ENCODE measurements at regions of chr2 and their contacts with region 1.

Region 1: GRCh38 chr2:231713730-231714430 is 5.6 kb downstream of the PTMA start:
- DNase-seq: peak; percentile 88 to 93
- ATAC-seq: peak; percentile 44 to 60
- H3K4me3 ChIP-seq: no peak overlapping the region
- H3K27ac ChIP-seq: peak overlapping the region in 1 of 2 experiments; percentile 73; a peak in 3 of 6 replicates
- H3K4me1 ChIP-seq: peaks cover 55% of the 10 kb centered on the region
- CTCF ChIP-seq: peak; percentile 89
- EP300 ChIP-seq: no peak
- POLR2A ChIP-seq: no peak
- RAD21 ChIP-seq: peak; percentile 50 to 60

Region 2: GRCh38 chr2:231530091-231531011 is 183.5 kb before region 1 on chr2 and contains the start of gene NMUR1:
- CTCF ChIA-PET with region 1: interaction called, 14 read pairs
- POLR2A ChIA-PET with region 1: no interaction called
- DNase-seq: peak; percentile 48 to 52
- ATAC-seq: peak; percentile 62 to 90
- H3K4me3 ChIP-seq: peak within 1 kb of the TSS; percentile 44
- H3K27ac ChIP-seq: peak within 1 kb of the TSS; percentile 30 to 82; a peak in 4 of 6 replicates
- H3K4me1 ChIP-seq: peaks cover 4% of the 10 kb centered on the region; the same call in 1 of the 3 replicates
- CTCF ChIP-seq: peak; percentile 90
- EP300 ChIP-seq: no peak
- POLR2A ChIP-seq: no peak
- RAD21 ChIP-seq: peak; percentile 20 to 57; a peak in 4 of 5 replicates
- polyA plus RNA-seq, gene NMUR1: 0.05 TPM in 1 of 2 replicates, not detected in the other

Region 3: GRCh38 chr2:231674587-231675338 is 39.1 kb before region 1 on chr2:
- CTCF ChIA-PET with region 1: interaction called, 4,158 read pairs
- POLR2A ChIA-PET with region 1: interaction called, 45 read pairs
- DNase-seq: peak in 1 of 2 experiments; percentile 70
- ATAC-seq: peak; percentile 42 to 60
- H3K4me3 ChIP-seq: no peak overlapping the region
- H3K27ac ChIP-seq: peak overlapping the region; percentile 97
- H3K4me1 ChIP-seq: peaks cover 43% of the 10 kb centered on the region
- CTCF ChIP-seq: peak; percentile 81
- EP300 ChIP-seq: no peak
- POLR2A ChIP-seq: no peak
- RAD21 ChIP-seq: peak; percentile 75 to 79

Region 4: DNA sequence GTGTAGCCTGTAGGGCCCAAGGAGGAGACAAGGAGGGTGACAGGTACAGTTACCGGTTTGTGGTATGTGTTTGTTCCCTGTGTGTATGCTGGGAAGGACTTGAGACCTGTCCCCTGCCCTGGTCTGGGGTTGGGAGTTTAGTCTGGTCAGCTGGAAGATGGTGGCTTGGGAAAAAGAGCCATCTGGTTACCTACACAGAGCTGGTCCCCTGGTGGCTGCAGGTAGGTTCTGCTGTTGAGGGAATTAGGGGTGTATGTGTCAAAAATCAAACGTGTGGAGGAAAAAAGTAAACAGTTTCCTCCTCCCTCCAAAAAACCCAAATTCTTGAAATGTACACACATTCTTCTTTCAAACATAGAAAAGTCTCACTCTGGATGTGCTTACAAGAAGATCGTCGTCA is 18.7 kb after region 1 on chr2:
- CTCF ChIA-PET with region 1: interaction called, 43 read pairs
- POLR2A ChIA-PET with region 1: no interaction called
- DNase-seq: no peak
- ATAC-seq: peak in 1 of 2 experiments; percentile 60; a peak in 1 of 6 replicates
- H3K4me3 ChIP-seq: no peak overlapping the region
- H3K27ac ChIP-seq: no peak overlapping the region
- H3K4me1 ChIP-seq: no peaks in the 10 kb centered on the region
- CTCF ChIP-seq: no peak
- EP300 ChIP-seq: no peak
- POLR2A ChIP-seq: no peak
- RAD21 ChIP-seq: no peak

Region 5: DNA sequence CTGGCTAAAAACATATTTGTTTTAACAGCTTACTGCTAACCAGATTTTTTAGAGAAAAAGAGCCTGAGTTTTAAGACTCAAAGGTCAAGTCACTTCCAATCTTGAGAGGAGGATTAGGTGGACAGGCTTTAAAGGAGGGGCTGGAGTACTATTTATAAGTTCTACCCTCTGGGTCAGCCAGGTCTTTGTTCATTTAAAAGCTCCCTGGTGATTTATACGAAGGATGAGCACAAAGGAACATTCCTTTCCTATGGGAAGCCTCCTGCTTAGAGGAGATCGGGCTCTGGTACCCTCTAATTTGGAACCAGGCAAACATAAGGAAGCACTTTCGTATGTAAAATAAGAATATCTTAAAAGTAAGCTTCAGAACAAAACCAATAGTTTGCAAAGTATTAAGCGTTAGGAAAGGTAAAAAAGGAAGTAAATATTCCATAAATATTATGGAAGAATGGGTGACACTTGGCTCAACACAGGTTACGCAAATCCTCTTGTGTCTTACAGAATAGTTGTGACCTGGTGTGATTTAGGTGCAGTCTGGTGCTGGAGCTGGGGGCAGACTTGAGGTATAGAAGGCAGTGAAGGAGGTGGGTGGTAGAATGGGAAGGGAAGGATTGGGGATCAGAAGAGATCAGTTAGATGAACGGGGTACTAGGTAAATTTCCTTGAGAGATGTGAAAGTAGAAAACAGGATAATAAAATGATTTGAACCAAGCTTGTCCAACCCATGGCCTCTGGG is 31.6 kb after region 1 on chr2:
- CTCF ChIA-PET with region 1: interaction called, 12 read pairs
- POLR2A ChIA-PET with region 1: no interaction called
- DNase-seq: no peak
- ATAC-seq: no peak
- H3K4me3 ChIP-seq: no peak overlapping the region
- H3K27ac ChIP-seq: no peak overlapping the region
- H3K4me1 ChIP-seq: no peaks in the 10 kb centered on the region
- CTCF ChIP-seq: no peak
- EP300 ChIP-seq: no peak
- POLR2A ChIP-seq: no peak
- RAD21 ChIP-seq: no peak

Measured in A549 (cell line).